ENCODE measurements at regions of chr13 and their contacts with region 1.

Region 1: DNA sequence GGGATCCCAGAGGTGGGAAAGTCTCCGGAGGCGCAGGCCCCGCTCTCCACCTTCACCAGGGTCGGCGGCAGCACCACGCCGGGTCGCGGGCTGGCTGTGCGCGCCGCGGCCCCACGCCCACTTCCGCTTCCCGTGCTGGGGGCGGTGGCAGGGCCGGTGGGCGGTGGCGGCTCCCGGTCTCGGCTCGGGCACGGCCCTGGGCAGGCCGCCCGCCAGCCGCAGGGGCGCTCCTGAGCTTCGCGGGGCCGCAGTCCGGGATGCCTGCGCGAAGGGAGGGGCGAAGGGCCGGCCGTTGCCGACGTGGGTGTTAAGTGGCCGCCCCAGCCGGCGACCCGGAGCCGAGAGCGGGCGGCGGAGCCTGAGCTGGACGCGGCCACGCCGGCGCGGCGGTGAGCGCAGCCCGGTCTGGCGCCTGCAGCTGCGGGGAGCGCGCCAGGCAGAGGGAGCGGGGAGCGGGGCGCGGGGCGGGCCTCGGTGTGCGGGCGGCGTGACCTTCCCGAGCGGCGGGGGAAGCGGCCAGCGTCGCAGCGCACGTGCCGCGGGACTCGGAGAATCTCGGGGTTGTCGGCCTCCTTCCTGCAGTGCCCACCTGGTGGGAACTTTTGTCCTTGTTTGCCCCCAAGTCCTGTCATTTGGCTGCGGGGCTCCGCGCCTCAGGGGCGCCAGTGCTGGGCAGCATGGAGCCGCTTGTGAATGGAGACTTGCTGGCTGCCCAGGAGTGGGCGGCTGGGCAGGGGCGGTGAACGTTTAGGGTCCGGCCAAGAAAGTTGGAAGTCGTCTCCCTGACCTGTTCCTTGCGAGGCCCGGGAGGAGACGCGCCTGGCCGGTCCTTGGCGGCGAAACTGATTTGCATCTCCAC is at the start of gene SLC25A15:
- ATAC-seq: peak; percentile 91 to 96 (median 94)
- H3K4me3 ChIP-seq: peak within 1 kb of the TSS; percentile 55 to 77 (median 65)
- H3K27ac ChIP-seq: peak within 1 kb of the TSS; percentile 87 to 91
- H3K4me1 ChIP-seq: peaks cover under 1 to 6% of the 10 kb centered on the region in 2 donors
- total RNA-seq, gene SLC25A15: 11.0 to 25.1 (median 15.7) TPM

Region 2: DNA sequence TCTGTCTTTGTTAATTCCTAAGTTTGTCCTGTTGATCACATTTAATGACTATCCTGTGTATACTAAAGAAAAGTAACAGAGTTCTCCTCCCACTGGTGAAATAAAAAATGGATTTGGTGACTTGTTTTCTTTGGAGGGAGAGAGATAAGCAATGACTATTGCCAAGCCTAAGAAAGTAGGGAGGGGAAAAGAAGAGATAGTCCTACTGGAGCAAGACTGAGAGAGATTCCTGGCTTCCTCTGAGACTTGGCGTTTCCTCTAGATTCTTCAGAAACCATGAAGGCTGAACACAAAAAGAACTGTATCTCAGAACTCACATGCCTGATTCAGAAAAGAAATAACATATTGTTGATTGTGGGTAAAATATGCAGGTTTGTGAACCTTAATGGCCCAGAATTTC is 529.6 kb before region 1 on chr13:
- in situ Hi-C with region 1: no loop called
- ATAC-seq: no peak
- H3K4me3 ChIP-seq: no peak overlapping the region
- H3K27ac ChIP-seq: no peak overlapping the region
- H3K4me1 ChIP-seq: no peaks in the 10 kb centered on the region

Region 3: GRCh38 chr13:40692946-40693345 is 96.6 kb before region 1 on chr13:
- in situ Hi-C with region 1: no loop called
- ATAC-seq: peak in 3 of 8 experiments; percentile 93 to 99 (median 99)
- H3K4me3 ChIP-seq: no peak overlapping the region
- H3K27ac ChIP-seq: no peak overlapping the region
- H3K4me1 ChIP-seq: no peaks in the 10 kb centered on the region

Region 4: GRCh38 chr13:41061075-41061913 is 271.8 kb after region 1 on chr13 and contains the start of gene WBP4:
- in situ Hi-C with region 1: loop called in 1 of 9 experiments (anchors 25 kb)
- ATAC-seq: peak; percentile 62 to 80 (median 73)
- H3K4me3 ChIP-seq: peak within 1 kb of the TSS; percentile 82 to 95 (median 85)
- H3K27ac ChIP-seq: peak within 1 kb of the TSS; percentile 87 to 93
- H3K4me1 ChIP-seq: peaks cover 0 to 13% of the 10 kb centered on the region in 2 donors
- total RNA-seq, gene WBP4: 8.7 to 27.6 (median 12.6) TPM